ENCODE measurements at regions of chr11 and their contacts with region 1.

Region 1: DNA sequence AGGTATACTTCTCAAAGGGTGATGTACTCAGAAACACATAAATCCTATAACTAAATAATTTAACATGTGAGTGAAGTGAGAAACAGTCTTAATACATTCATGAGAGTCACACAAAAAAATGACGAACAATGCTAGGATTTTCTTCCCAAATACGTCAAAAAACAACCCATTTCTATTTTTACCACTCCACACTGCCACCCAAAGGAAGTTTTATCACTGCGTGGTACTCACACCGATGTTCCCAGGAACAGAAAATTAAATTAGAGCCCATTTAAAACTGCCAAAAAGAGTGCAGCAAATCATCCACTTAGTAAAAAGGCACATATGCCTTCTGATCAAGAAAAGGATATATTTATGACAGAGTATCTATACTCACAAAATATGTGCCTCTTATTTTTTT is 710.9 kb upstream of the FAT3 start:
- DNase-seq: no peak

Region 2: DNA sequence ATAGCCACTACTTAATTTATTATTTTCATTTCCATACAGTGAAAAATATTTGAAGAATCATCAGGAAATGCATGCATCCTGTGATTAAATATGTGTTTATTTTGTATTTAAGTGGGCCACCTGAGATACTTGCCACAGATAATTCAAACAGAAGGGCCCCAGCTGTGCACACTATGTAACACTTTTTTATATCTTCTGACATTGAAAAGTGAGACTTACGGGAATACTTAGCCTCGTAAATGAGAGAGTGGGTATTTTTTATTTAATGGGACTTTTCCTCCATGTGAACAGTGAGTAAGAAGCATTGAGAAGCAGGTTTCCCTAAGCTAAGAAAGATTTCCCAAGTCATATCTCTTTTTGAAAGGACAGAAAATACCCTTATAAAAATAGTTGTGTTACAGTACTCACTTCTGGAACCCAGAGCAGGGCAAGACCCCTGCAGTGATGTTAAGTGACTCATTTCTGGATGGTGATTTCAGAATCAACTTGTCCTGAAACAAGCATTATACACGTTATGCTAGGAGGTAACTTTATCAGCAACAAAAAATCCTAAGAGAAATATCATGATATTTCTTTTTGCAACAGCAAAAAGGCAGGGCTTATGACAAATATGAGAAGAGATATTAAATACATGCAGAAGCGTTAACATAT is 812.8 kb before region 1 on chr11:
- intact Hi-C with region 1: loop called in 1 of 2 experiments (anchors 5 kb)
- DNase-seq: no peak

Region 3: GRCh38 chr11:91527380-91528030 is 13.8 kb after region 1 on chr11:
- intact Hi-C with region 1: no loop called
- DNase-seq: no peak